Psoas muscle (tissue), 8 donors: ENCODE measurements at regions of chr11 and their contacts with region 1.

Region 1: GRCh38 chr11:74449369-74449931 is 17.9 kb downstream of the KCNE3 start:
- DNase-seq: no peak
- ATAC-seq: peak; percentile 69 to 79 (median 71)
- H3K4me3 ChIP-seq: no peak overlapping the region
- H3K27ac ChIP-seq: no peak overlapping the region
- H3K4me1 ChIP-seq: peaks cover 4% of the 10 kb centered on the region
- H3K27me3 ChIP-seq: no peaks in the 10 kb centered on the region
- CTCF ChIP-seq: peak; percentile 72

Region 2: DNA sequence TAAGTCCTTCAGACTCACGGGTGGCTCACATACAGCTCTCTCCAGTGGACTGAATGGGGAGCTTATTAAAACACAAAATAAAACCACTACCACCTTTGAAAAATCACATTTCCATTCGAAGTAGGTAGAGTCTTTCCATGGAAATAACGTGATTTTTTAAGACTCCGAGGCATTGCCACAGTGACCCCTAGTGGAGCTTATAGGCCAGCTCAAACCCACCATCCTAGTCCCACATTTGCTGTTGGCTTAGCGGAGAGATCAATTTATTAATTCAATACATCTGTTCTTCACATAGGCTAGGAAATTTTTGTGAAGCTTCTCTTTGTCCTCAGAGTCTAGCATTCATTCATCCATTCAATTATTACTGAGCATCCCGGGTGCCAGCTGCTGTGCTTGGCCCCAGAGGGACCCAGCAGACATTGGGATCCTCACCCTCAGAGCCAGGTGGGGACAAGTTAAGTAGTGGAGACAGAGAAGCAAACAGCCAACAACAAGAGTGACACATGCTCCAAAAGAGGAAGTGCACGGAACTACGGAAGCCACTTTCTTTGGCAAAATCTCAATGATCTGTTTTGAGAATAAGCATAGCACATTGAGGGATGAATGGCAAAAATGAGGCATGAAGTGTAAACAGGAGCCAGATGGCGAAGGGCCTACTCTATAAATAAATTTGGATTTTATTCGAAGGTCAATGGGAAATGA is 127.8 kb before region 1 on chr11:
- intact Hi-C with region 1: loop called in 1 of 2 experiments (anchors 5 kb)
- DNase-seq: no peak
- ATAC-seq: no peak
- H3K4me3 ChIP-seq: no peak overlapping the region
- H3K27ac ChIP-seq: peak overlapping the region; percentile 61
- H3K4me1 ChIP-seq: peaks cover 51% of the 10 kb centered on the region
- H3K27me3 ChIP-seq: no peaks in the 10 kb centered on the region
- CTCF ChIP-seq: peak; percentile 44

Region 3: GRCh38 chr11:74388678-74389327 is 60.6 kb before region 1 on chr11:
- intact Hi-C with region 1: loop called (anchors 2 kb)
- DNase-seq: no peak
- ATAC-seq: peak in 3 of 4 donors; percentile 68 to 94 (median 89)
- H3K4me3 ChIP-seq: no peak overlapping the region
- H3K27ac ChIP-seq: no peak overlapping the region
- H3K4me1 ChIP-seq: no peaks in the 10 kb centered on the region
- H3K27me3 ChIP-seq: no peaks in the 10 kb centered on the region
- CTCF ChIP-seq: peak; percentile 53

Region 4: GRCh38 chr11:74570266-74571061 is 121.0 kb after region 1 on chr11:
- intact Hi-C with region 1: loop called (anchors 1 to 2 kb)
- DNase-seq: no peak
- ATAC-seq: peak; percentile 54 to 80 (median 69)
- H3K4me3 ChIP-seq: no peak overlapping the region
- H3K27ac ChIP-seq: no peak overlapping the region
- H3K4me1 ChIP-seq: no peaks in the 10 kb centered on the region
- H3K27me3 ChIP-seq: no peaks in the 10 kb centered on the region
- CTCF ChIP-seq: peak; percentile 66

Region 5: DNA sequence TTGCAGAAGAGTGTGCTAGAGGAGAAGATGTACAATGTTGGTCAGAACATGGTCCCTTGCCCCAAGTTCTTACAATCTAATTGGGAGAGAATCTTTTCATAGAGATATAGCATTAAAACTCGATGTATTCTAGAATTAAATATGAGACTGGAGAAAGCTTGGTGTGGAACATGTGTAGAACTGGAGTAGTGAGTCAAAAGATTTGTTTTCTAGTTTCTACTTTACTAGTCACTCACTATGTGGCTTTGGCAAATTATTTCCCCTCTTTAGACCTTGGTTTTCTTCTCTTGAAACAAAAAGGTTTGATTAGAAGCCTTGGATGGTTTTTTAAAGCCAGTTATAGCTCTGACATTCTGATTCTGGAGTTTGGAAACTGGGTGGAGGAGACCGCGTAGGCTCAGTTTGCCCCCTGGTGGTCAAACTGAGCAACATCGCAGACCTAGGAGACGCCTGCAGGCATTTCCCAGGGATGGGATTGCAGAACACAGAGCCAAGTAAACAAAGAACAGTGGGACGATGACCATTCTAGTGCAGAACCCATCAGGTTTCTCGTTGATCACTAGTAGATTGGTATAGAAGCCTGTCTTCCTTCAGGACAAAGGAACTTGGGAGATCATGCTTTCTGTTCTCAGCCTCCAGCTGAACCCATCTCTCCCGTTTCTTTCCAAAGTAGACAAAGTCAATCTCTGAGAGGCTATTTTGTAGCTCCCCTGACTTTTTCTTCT is 290.3 kb after region 1 on chr11:
- intact Hi-C with region 1: loop called in 1 of 2 experiments (anchors 10 kb)
- DNase-seq: peak; percentile 27 to 69
- ATAC-seq: peak; percentile 89 to 97 (median 92)
- H3K4me3 ChIP-seq: no peak overlapping the region
- H3K27ac ChIP-seq: no peak overlapping the region
- H3K4me1 ChIP-seq: no peaks in the 10 kb centered on the region
- H3K27me3 ChIP-seq: peaks cover 0 to 2% (median 0%) of the 10 kb centered on the region in 3 donors
- CTCF ChIP-seq: peak; percentile 92